ENCODE measurements at regions of chr15 and their contacts with region 1.

Region 1: DNA sequence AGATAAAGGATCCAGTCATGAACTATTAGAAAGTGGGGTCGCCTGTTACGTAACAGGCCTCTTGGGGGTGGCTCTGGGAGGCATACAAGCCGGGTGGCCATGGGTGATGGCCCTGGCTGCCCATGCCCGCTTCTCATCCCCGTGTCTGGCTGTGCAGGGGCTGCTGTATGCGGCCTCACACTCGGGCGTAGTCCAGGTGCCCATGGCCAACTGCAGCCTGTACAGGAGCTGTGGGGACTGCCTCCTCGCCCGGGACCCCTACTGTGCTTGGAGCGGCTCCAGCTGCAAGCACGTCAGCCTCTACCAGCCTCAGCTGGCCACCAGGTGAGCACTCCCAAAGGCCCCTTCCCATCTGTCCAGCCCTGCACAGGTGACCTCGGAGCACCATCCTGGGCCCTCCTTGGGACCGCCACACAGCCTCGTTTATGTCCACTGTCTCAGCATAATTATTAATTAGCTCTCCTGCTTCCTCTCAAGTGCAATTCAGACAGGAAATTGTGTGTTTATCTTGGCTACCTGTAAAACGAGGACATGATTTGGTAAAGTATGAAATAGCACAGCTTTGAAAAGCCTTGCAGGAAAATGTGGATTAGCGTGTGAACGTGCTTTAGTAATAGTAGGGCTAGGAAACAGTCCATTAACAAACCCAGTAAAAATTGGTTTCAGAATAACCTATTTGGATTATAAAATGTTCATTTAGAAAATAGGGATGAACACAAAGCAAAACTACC is 8.1 kb downstream of the CIB1 start:
- DNase-seq: peak in 1 of 6 donors; percentile 81
- ATAC-seq: no peak
- H3K4me3 ChIP-seq: no peak overlapping the region
- H3K27ac ChIP-seq: peak overlapping the region in 1 of 4 donors; percentile 4
- H3K4me1 ChIP-seq: peaks cover 33 to 41% (median 36%) of the 10 kb centered on the region in 3 donors
- H3K27me3 ChIP-seq: no peaks in the 10 kb centered on the region
- CTCF ChIP-seq: no peak

Region 2: GRCh38 chr15:90161950-90162361 is 63.7 kb before region 1 on chr15:
- intact Hi-C with region 1: loop called in 1 of 3 experiments (anchors 5 kb)
- DNase-seq: peak in 1 of 6 donors; percentile 1
- ATAC-seq: no peak
- H3K4me3 ChIP-seq: no peak overlapping the region
- H3K27ac ChIP-seq: peak overlapping the region in 3 of 4 donors; percentile 55 to 88 (median 84)
- H3K4me1 ChIP-seq: peaks cover 32 to 41% (median 33%) of the 10 kb centered on the region in 3 donors
- H3K27me3 ChIP-seq: no peaks in the 10 kb centered on the region
- CTCF ChIP-seq: no peak

Measured in pancreas (tissue), 10 donors.